ENCODE measurements at regions of chr9 and their contacts with region 1.

Region 1: GRCh38 chr9:33816327-33817252 is at the start of gene UBE2R2:
- DNase-seq: peak; percentile 87 to 93 (median 91)
- H3K4me3 ChIP-seq: peak within 1 kb of the TSS; percentile 94
- H3K27ac ChIP-seq: peak within 1 kb of the TSS; percentile 94 to 100
- H3K4me1 ChIP-seq: peaks cover 4% of the 10 kb centered on the region
- H3K27me3 ChIP-seq: no peaks in the 10 kb centered on the region
- CTCF ChIP-seq: peak in 1 of 3 donors; percentile 20
- EP300 ChIP-seq: no peak
- POLR2A ChIP-seq: peak; percentile 60
- total RNA-seq, gene UBE2R2: 19.6 to 50.1 (median 43.3) TPM

Region 2: GRCh38 chr9:33852216-33852826 is 35.7 kb after region 1 on chr9:
- intact Hi-C with region 1: loop called in 2 of 4 experiments (anchors 5 kb)
- DNase-seq: peak in 3 of 5 donors; percentile 20 to 64 (median 52)
- H3K4me3 ChIP-seq: no peak overlapping the region
- H3K27ac ChIP-seq: no peak overlapping the region
- H3K4me1 ChIP-seq: peaks cover 26% of the 10 kb centered on the region
- H3K27me3 ChIP-seq: no peaks in the 10 kb centered on the region
- CTCF ChIP-seq: peak in 2 of 3 donors; percentile 27 to 48
- EP300 ChIP-seq: no peak
- POLR2A ChIP-seq: no peak

Region 3: DNA sequence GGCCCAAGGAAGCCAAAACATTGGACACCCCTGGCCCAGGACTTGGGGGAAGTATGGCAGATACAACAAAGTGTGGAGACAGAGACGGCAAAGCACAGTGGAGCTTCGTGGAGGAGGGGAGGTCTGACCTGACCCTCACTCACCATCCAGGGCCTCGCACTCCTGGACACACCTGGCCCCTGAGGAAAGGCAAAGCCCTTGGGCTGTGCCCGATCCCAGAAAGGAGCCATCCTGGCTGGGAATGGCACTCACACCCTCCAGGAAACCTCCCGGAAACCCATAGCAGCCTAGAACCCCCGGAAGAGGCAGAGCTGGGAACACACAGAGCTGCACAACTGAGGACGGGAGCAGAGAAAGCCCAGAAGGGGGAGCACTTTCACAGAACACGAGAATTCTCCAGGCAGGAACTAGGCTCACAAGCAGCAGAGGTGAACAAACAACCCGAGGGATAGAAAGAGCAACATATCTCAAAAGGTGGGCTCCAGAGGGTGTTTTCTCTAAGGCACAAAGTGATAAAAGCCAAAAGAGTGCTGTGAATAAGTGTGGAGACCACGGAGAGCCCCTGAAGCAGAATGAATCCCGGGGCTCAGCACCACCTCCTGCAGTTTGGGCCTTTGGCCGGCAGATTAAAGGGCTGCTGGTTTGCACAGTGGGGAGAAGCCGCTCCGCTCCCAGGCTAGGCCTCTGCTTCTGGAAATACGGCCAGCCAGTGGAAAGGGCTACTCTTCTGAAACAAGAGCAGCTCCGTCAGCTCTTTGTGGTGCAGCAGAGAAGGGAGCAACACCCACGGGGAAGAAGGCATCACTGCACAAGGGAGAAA is 108.6 kb after region 1 on chr9:
- intact Hi-C with region 1: loop called in 2 of 4 experiments (anchors 10 kb)
- DNase-seq: peak; percentile 51 to 62 (median 54)
- H3K4me3 ChIP-seq: no peak overlapping the region
- H3K27ac ChIP-seq: no peak overlapping the region
- H3K4me1 ChIP-seq: peaks cover 1% of the 10 kb centered on the region
- H3K27me3 ChIP-seq: no peaks in the 10 kb centered on the region
- CTCF ChIP-seq: peak; percentile 24 to 29 (median 29)
- EP300 ChIP-seq: no peak
- POLR2A ChIP-seq: no peak

Region 4: DNA sequence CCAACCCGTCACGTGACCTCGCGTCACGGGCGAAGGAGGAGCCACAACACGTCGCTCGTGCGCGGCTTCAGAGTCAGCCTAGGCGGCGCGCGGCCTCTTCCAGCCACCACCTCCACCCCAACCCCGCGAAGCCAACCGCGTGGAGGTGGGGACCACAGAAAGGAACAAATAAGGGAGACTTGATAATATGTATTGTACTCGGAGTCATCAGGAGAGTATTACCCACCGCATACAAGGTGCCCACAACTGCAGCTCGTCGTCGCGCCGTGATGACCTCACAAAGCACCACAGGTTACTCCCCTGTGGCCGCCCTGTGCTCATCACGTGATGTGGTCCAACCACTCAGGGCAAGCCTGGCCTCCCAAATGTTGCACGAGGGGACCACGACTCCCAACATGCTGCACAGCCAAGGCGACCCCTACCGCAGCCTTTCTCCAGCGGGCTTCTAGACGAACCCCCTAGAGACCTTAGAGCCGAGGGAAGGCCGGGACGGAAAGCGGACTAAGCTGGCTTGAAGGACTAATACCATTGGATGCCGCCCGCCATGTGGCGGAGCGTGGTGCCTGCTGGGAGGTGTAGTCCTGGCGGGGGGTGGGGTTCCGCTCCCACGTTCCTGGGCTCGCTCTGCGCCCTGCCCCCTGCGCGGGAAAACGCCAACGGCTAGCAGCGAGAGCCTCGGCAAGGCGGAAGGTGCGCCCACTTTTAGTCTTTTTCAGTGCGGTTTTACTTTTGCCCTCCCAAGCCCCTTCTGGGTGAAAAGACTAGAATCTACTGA is 232.5 kb after region 1 on chr9:
- intact Hi-C with region 1: loop called in 1 of 4 experiments (anchors 5 kb)
- DNase-seq: peak; percentile 97 to 99 (median 98)
- H3K4me3 ChIP-seq: peak overlapping the region; percentile 86
- H3K27ac ChIP-seq: peak overlapping the region; percentile 86 to 97
- H3K4me1 ChIP-seq: peaks cover 6% of the 10 kb centered on the region
- H3K27me3 ChIP-seq: no peaks in the 10 kb centered on the region
- CTCF ChIP-seq: peak in 2 of 3 donors; percentile 8 to 17
- EP300 ChIP-seq: no peak
- POLR2A ChIP-seq: peak; percentile 21

Region 5: DNA sequence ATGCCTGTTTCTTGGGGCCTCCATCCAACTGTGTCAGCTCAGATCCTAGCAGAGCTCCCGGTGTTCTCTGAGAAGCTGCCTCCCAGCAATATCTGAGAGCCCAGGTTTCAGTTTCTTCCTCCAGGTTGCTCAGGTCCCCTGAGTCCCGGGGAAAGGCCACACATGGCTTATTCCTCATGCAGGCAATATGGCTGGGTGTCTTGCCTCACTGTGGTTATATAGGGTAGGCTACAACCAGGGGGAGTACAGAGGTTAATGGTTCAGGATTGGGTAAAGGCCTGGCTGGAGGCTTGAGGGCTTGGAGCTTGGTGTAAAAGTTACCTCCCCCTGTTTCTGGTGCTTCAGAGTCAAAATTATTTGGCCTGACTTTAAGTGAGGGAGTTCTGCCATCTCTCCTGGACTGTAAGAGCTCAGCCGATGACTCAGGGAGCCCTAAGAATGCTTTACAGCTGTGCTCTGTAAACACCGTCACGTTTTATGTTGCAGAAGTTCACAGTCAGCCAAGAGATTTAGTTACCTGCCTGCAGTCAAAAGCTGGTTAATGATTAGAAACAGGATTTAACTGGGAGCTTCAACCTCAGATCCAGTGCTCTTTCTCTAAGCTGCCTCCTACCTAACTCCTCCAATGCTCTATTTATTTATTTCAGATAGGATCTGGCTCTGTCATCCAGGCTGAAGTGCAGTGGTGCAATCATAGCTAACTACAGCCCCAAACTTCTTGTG is 256.4 kb after region 1 on chr9:
- intact Hi-C with region 1: loop called in 1 of 4 experiments (anchors 5 kb)
- DNase-seq: peak in 2 of 5 donors; percentile 28 to 33
- H3K4me3 ChIP-seq: no peak overlapping the region
- H3K27ac ChIP-seq: peak overlapping the region; percentile 14 to 36
- H3K4me1 ChIP-seq: peaks cover 5% of the 10 kb centered on the region
- H3K27me3 ChIP-seq: no peaks in the 10 kb centered on the region
- CTCF ChIP-seq: no peak
- EP300 ChIP-seq: no peak
- POLR2A ChIP-seq: no peak

Measured in ovary (tissue), 10 donors.